GM12878 (cell line): ENCODE measurements at regions of chr5 and their contacts with region 1.

Region 1: DNA sequence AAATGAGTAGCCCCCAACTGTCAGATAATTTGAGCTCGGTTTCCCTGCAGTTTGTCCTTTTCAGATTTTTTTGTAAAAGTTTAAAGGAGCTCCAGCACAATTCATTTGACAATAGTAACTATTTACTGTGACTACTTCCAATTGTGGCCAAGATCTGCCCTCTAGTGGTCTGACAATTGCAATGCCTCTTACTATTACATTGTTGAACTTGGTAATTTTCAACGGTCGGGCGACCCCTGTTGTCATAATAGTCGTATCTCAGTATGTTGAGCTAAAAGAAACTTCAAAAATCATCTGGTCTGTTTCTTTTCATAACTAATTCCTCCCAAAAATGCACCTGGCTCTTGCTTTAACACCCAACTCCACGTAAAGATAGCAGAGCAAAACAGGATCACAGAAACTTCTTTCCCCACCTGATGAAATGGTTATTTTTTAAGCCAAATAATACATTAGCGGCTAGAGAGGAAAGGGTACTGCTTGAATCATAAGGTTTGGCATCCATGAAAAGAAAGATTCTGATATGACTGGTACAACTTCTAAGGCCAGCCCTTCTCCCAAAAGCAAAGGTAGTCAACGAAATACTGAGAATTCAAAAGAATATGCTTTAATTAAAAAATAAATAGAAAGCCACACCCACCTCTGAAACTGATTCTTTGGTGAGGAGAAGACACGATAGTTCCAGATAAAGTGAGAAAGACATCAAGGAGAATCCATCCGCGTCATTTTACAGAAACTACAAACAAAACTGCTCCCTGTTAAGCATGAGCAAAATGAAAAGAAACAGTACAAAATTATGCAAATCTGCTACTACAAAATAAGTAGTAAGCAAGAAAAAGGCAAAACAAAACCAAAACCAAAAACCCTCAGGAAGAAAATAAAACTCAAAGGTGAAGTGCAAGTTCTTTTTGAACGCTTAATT is 76.9 kb upstream of the HTR4 start:
- DNase-seq: peak; percentile 43
- ATAC-seq: peak; percentile 92
- H3K4me3 ChIP-seq: peak overlapping the region; percentile 47; the same call in 1 of the 2 replicates
- H3K27ac ChIP-seq: no peak overlapping the region
- H3K4me1 ChIP-seq: peaks cover 3% of the 10 kb centered on the region; the same call in 1 of the 2 replicates
- H3K27me3 ChIP-seq: no peaks in the 10 kb centered on the region; a peak in 1 of 4 replicates
- CTCF ChIP-seq: peak; percentile 83 to 99 (median 98); a peak in 5 of 6 replicates
- EP300 ChIP-seq: no peak
- POLR2A ChIP-seq: no peak
- RAD21 ChIP-seq: peak; percentile 83

Region 2: GRCh38 chr5:148202531-148203203 is 528.5 kb before region 1 on chr5 and contains the start of gene SPINK6:
- CTCF ChIA-PET with region 1: interaction called, 4 read pairs
- POLR2A ChIA-PET with region 1: no interaction called
- RAD21 ChIA-PET with region 1: no interaction called
- SMC1A ChIA-PET with region 1: no interaction called
- in situ Hi-C with region 1: no loop called
- intact Hi-C with region 1: loop called (anchors 5 kb)
- DNase-seq: no peak
- ATAC-seq: no peak
- H3K4me3 ChIP-seq: no peak within 1 kb of the TSS
- H3K27ac ChIP-seq: no peak within 1 kb of the TSS
- H3K4me1 ChIP-seq: no peaks in the 10 kb centered on the region
- H3K27me3 ChIP-seq: no peaks in the 10 kb centered on the region
- CTCF ChIP-seq: no peak
- EP300 ChIP-seq: no peak
- POLR2A ChIP-seq: no peak
- RAD21 ChIP-seq: no peak
- polyA plus RNA-seq, gene SPINK6: not detected

Region 3: GRCh38 chr5:148719605-148720004 is 11.6 kb before region 1 on chr5:
- CTCF ChIA-PET with region 1: interaction called, 48 read pairs
- POLR2A ChIA-PET with region 1: no interaction called
- RAD21 ChIA-PET with region 1: interaction called, 4 read pairs
- SMC1A ChIA-PET with region 1: interaction called, 5 read pairs
- in situ Hi-C with region 1: no loop called
- intact Hi-C with region 1: no loop called
- DNase-seq: no peak
- ATAC-seq: no peak
- H3K4me3 ChIP-seq: no peak overlapping the region
- H3K27ac ChIP-seq: no peak overlapping the region
- H3K4me1 ChIP-seq: no peaks in the 10 kb centered on the region
- H3K27me3 ChIP-seq: no peaks in the 10 kb centered on the region; a peak in 2 of 4 replicates
- CTCF ChIP-seq: no peak
- EP300 ChIP-seq: no peak
- POLR2A ChIP-seq: no peak
- RAD21 ChIP-seq: no peak

Region 4: GRCh38 chr5:148820461-148821395 is 89.5 kb after region 1 on chr5:
- CTCF ChIA-PET with region 1: interaction called, 21 read pairs
- POLR2A ChIA-PET with region 1: no interaction called
- RAD21 ChIA-PET with region 1: interaction called, 3 read pairs
- SMC1A ChIA-PET with region 1: interaction called, 4 read pairs
- in situ Hi-C with region 1: no loop called
- intact Hi-C with region 1: no loop called
- DNase-seq: no peak
- ATAC-seq: peak; percentile 76
- H3K4me3 ChIP-seq: no peak overlapping the region
- H3K27ac ChIP-seq: no peak overlapping the region
- H3K4me1 ChIP-seq: peaks cover 5% of the 10 kb centered on the region
- H3K27me3 ChIP-seq: no peaks in the 10 kb centered on the region
- CTCF ChIP-seq: peak; percentile 49 to 59 (median 59); a peak in 5 of 6 replicates
- EP300 ChIP-seq: no peak
- POLR2A ChIP-seq: no peak
- RAD21 ChIP-seq: peak; percentile 41

Region 5: DNA sequence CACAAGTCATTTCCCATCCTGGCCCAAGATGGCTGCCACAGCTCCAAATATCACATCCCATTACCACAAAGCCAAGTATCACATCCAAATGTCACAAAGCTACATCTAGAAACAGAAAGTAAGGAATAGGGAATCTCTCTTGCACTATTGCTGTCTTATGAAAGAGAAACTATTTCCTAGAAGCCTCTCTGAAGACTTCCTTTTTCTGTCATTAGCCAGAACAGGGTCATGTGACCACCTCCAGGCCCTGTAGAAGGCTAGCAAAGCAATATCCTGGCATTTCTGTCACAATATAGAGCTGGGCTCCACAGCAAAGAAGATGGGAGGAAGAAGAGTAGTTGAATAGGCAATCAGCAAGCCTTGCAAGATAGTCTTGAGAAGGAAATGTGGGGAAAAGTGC is 232.5 kb after region 1 on chr5:
- CTCF ChIA-PET with region 1: interaction called, 523 read pairs
- POLR2A ChIA-PET with region 1: no interaction called
- RAD21 ChIA-PET with region 1: interaction called, 74 read pairs
- SMC1A ChIA-PET with region 1: interaction called, 80 read pairs
- in situ Hi-C with region 1: loop called (anchors 5 kb)
- intact Hi-C with region 1: no loop called
- DNase-seq: no peak
- ATAC-seq: peak; percentile 48; the same call in 1 of the 3 replicates
- H3K4me3 ChIP-seq: no peak overlapping the region
- H3K27ac ChIP-seq: no peak overlapping the region
- H3K4me1 ChIP-seq: no peaks in the 10 kb centered on the region
- H3K27me3 ChIP-seq: no peaks in the 10 kb centered on the region
- CTCF ChIP-seq: no peak
- EP300 ChIP-seq: no peak
- POLR2A ChIP-seq: no peak
- RAD21 ChIP-seq: no peak

Region 6: DNA sequence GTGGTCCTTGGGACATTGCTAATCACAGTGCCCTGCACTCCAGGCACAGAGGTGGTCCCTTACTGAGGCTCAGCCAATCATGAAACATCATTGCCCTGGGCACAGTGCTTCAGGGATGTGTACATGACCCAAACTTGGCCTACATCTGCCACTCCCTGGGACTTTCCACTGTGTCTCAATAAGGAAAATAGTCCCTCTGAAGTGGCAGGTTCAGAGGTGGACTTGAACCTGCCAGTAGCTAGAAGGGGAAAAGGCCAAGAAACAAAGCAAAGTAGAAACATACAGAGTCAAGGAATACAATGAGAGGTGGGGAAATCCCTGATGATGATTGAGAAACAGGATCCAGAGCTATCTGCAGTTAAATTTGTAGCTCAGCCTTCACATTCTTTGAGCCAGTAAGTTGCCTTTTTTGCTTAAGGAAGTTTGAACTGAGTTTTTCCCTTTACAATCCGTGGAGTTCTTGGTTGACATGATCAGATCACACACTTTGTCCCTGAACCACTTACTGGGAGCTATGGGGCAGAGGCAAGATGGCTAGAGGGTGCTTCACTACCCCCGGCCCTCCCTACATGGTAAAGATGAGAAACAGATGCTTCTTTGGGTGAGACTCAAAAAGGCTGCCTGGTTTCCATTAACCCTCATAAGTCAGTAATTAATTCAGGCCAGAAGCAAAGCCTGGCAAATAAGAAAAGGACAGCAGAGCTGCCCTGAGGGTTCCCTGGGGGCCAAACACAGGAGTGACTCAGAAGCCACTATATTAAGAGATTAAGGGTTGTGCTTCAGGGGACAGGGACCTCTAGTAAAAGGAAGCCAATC is 274.1 kb after region 1 on chr5:
- CTCF ChIA-PET with region 1: interaction called, 105 read pairs
- POLR2A ChIA-PET with region 1: no interaction called
- RAD21 ChIA-PET with region 1: interaction called, 5 read pairs
- SMC1A ChIA-PET with region 1: interaction called, 55 read pairs
- in situ Hi-C with region 1: no loop called
- intact Hi-C with region 1: no loop called
- DNase-seq: no peak
- ATAC-seq: no peak
- H3K4me3 ChIP-seq: no peak overlapping the region
- H3K27ac ChIP-seq: no peak overlapping the region
- H3K4me1 ChIP-seq: no peaks in the 10 kb centered on the region
- H3K27me3 ChIP-seq: no peaks in the 10 kb centered on the region
- CTCF ChIP-seq: no peak
- EP300 ChIP-seq: no peak
- POLR2A ChIP-seq: no peak
- RAD21 ChIP-seq: no peak